B cell (primary cell): ENCODE measurements at regions of chr17 and their contacts with region 1.

Region 1: GRCh38 chr17:41121742-41122141 is 2.2 kb downstream of the KRTAP4-12 start:
- DNase-seq: no peak
- ATAC-seq: no peak
- H3K4me3 ChIP-seq: no peak overlapping the region
- H3K4me3 Mint-ChIP-seq: no peak overlapping the region
- H3K27ac ChIP-seq: no peak overlapping the region
- H3K27ac Mint-ChIP-seq: no peak overlapping the region
- H3K4me1 ChIP-seq: peaks cover 56 to 63% of the 10 kb centered on the region in 2 donors
- H3K4me1 Mint-ChIP-seq: peaks cover 30% of the 10 kb centered on the region
- H3K27me3 ChIP-seq: no peaks in the 10 kb centered on the region
- H3K27me3 Mint-ChIP-seq: peaks cover 13% of the 10 kb centered on the region
- CTCF ChIP-seq: no peak

Region 2: DNA sequence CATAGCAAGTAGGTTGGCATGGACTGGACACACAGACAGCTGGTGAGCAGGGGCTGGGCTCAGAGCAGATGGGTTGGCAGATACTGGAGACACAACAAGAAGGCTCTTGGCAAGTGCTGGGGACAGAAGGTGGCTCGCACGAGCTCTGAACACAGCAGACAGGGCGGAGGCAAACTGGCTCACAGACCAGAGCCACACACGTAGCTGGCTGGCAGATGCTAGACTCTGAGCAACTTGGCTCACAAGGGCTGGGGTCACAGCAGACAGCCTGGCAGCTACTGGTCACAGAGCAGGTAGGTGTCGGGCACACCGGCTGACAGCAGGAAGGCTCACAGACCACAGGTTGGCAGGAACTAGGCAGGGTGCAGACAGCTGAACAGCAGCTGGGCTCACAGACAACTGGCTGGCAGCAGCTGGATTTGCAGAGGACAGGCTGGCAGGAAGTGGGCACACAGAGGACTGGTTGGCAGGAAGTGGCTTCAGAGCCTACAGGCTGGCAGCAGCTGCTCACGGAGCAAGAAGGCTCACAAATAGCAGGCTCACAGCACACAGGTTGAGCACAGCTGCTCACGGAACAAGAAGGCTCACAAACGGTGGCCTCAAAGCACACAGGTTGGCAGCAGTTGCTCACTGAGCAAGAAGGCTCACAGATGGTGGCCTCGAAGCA is 186.6 kb after region 1 on chr17:
- CTCF ChIA-PET with region 1: interaction called, 5 read pairs
- POLR2A ChIA-PET with region 1: no interaction called
- intact Hi-C with region 1: loop called (anchors 5 kb)
- DNase-seq: peak; percentile 87
- ATAC-seq: peak; percentile 85
- H3K4me3 ChIP-seq: peak overlapping the region in 4 of 5 experiments; percentile 13 to 36 (median 26)
- H3K4me3 Mint-ChIP-seq: peak overlapping the region; percentile 78
- H3K27ac ChIP-seq: peak overlapping the region; percentile 86
- H3K27ac Mint-ChIP-seq: peak overlapping the region; percentile 94
- H3K4me1 ChIP-seq: peaks cover 34% of the 10 kb centered on the region in 2 donors
- H3K4me1 Mint-ChIP-seq: peaks cover 45% of the 10 kb centered on the region
- H3K27me3 ChIP-seq: peaks cover 0 to 3% (median 0%) of the 10 kb centered on the region in 4 experiments
- H3K27me3 Mint-ChIP-seq: no peaks in the 10 kb centered on the region
- CTCF ChIP-seq: no peak